Left ventricle myocardium inferior (tissue), 1 donor: ENCODE measurements at regions of chr10 and their contacts with region 1.

Region 1: DNA sequence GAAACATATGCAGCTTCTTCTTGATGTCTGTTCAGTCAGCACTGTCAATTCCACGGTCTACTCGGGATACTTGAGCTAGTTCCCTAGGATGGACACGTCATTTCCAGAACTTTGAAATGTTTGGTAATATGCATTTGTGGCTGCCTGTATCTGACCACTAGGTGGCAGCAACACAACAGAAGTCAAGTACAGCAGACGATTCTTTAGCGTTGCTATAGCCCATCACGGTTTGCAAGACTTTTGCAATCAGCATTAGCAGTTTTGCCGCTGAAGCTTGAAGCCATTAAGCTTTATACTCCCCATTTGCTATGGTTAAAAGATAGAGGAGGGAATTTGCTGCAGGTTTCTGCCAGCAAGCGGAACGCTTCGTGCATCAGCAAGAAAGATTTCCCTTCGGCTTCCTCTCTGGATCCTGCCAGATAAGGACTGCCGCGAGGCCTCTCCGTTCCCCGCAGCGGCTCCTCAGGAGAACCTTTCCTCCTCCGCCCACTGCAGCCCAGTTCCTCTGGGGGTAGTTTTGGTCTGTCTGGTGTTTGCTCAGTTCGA is 63.5 kb downstream of the ABCC2 start:
- DNase-seq: peak; percentile 39
- H3K4me3 ChIP-seq: peak overlapping the region; percentile 56
- H3K27ac ChIP-seq: peak overlapping the region; percentile 36
- H3K4me1 ChIP-seq: peaks cover 10% of the 10 kb centered on the region
- H3K27me3 ChIP-seq: no peaks in the 10 kb centered on the region
- CTCF ChIP-seq: peak; percentile 95

Region 2: GRCh38 chr10:99714446-99714845 is 131.5 kb before region 1 on chr10:
- intact Hi-C with region 1: no loop called
- DNase-seq: no peak
- H3K4me3 ChIP-seq: no peak overlapping the region
- H3K27ac ChIP-seq: no peak overlapping the region
- H3K4me1 ChIP-seq: peaks cover under 1% of the 10 kb centered on the region
- H3K27me3 ChIP-seq: no peaks in the 10 kb centered on the region
- CTCF ChIP-seq: no peak

Region 3: DNA sequence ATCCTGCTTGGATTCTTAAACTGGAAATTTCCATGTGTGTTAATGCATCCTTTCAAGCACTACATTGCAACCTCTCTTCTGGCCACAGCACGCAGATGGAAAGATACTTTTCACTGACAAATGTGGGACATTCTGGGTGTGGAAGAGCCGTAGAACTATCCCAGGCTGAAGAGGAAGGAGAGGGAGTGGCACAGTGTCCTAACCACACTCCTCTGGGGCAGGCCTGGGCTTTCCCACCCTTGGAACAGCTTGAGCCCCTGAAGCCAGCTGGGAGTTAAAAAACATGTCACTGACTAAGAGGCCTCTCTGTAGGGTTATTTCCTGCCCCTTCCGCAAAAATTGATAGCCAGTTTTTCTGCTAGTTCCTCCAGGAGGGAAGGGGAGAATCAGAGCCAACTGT is 197.9 kb after region 1 on chr10:
- intact Hi-C with region 1: loop called (anchors 2 kb)
- DNase-seq: peak; percentile 63
- H3K4me3 ChIP-seq: no peak overlapping the region
- H3K27ac ChIP-seq: peak overlapping the region; percentile 88
- H3K4me1 ChIP-seq: peaks cover 38% of the 10 kb centered on the region
- H3K27me3 ChIP-seq: no peaks in the 10 kb centered on the region
- CTCF ChIP-seq: peak; percentile 14